Dorsolateral prefrontal cortex (tissue), 120 donors: ENCODE measurements at regions of chr18 and their contacts with region 1.

Region 1: DNA sequence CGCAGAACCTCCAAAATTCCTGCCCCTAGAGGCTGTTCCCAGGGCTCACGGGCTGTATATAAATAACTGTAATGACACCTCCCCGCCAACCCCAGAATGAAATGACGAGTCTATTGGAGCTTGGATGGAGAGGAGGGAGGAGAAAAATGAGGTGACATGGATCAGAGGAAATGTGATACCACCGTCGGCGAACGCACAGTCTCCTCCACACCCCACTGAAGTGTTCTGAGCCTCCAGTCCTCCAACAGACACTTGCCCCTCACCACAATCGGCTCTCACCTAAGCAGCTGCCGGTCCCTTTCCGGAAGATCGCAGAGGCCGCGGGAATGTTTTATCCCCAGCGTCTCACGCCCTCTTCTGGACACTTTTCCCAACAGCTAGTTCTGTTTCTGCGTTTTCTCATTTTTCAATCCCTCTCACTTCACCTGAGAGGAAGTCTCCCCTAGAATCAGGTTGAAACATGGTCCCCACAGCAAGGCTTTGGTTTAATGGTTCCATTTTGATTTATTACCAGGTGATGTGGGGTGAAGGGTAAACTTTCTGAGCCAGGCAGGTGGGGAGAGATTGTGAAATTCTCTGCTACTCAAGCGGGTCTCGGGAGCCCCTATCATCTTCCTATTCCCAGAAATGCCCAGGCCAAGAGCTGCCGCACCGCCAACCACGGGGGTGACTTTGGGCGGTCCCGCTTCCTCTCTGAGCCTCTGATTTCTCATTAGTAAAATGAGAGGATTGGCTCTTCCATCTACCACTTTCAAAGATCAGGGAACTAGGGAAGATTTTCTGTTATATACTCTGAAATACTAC is 9.1 kb upstream of the MYO5B start:
- DNase-seq: peak in 7 of 10 donors; percentile 17 to 64 (median 47)
- H3K4me3 ChIP-seq: peak overlapping the region in 41 of 59 donors; percentile 2 to 58 (median 36)
- H3K27ac ChIP-seq: no peak overlapping the region
- H3K27me3 ChIP-seq: peaks cover 0 to 33% (median 5%) of the 10 kb centered on the region in 45 donors
- CTCF ChIP-seq: peak; percentile 30 to 78 (median 68)

Region 2: DNA sequence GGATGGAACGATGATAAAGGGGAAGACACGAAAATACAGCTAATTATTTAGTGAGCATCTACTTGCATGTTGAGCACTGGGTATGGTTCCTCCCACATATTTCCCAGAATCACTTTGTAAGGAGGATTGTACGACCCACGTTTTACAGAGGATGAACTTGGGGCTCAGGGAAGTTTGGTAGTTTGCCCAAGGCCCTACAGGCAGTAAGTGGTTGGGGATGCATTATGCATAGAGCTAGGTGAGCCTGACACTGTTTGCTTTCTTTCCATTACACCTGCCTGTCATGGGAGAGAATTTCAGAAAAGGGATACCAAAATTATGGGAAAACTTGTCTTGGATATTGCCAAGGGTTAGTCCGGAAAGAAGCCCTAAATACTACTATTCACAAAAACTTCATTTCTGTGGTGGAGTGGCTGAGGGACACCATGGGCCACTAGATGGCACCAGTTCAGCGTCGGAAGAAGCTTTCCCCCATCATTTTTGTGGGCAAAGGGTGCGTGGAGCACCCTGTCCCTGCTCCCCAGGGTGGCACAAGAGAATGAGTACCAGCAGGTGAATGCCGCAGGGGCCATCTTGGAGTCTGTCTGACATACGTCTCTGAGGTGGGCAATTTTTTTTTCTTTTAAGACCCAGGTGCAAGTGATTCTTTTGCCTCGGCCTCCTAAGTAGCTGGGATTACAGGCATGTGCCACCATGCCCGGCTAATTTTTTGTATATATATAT is 693.4 kb before region 1 on chr18:
- intact Hi-C with region 1: loop called in 1 of 2 experiments (anchors 10 kb)
- DNase-seq: peak in 8 of 10 donors; percentile 28 to 65 (median 37)
- H3K4me3 ChIP-seq: no peak overlapping the region
- H3K27ac ChIP-seq: no peak overlapping the region
- H3K27me3 ChIP-seq: no peaks in the 10 kb centered on the region
- CTCF ChIP-seq: peak; percentile 60 to 93 (median 79)

Region 3: GRCh38 chr18:50009773-50010335 is 194.1 kb before region 1 on chr18:
- intact Hi-C with region 1: loop called in 1 of 2 experiments (anchors 5 kb)
- DNase-seq: no peak
- H3K4me3 ChIP-seq: no peak overlapping the region
- H3K27ac ChIP-seq: no peak overlapping the region
- H3K27me3 ChIP-seq: no peaks in the 10 kb centered on the region
- CTCF ChIP-seq: peak in 52 of 56 donors; percentile 21 to 69 (median 50)